Cardiac septum (tissue), 1 donor: ENCODE measurements at regions of chr5 and their contacts with region 1.

Region 1: GRCh38 chr5:75336625-75337339 is at the start of gene HMGCR:
- DNase-seq: peak; percentile 100
- total RNA-seq, gene HMGCR: 12.6 TPM

Region 2: GRCh38 chr5:75053304-75054133 is 283.3 kb before region 1 on chr5:
- intact Hi-C with region 1: loop called (anchors 5 kb)
- DNase-seq: peak; percentile 80

Region 3: GRCh38 chr5:75678155-75678554 is 341.4 kb after region 1 on chr5:
- intact Hi-C with region 1: loop called (anchors 10 kb)
- DNase-seq: no peak